ENCODE measurements at regions of chr9 and their contacts with region 1.

Region 1: DNA sequence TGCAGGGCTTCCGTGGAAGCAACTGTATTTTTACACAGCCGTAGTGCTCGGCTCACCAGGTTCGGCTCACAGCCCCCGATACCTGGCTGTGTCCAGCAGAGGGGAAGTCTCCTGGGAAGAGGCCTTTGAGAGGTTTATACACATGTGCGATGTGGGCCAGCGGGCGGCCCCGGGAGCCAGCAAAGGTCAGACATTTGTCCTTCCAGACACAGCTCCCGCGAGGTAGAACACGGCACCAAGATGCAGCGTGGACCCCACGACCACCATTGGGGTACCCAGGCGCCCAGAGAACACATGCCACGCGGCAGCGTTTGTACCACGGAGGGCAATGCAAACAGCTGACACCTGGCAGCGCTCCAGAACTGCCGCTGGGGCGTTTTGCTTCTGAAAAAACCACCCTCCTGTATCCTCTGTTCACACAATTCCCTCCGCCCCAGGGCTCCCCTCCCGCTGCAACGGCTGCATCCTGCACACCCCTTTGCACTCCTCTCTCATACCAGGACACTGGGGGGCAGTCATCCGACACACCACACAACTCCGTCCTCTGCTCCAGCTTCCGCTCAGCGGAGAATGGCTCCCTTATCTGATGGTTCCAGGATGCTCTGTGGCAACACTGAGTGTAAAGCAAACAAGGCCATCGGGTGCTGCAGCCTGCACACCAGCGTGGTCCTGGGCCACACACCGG is 235.3 kb downstream of the SYK start:
- DNase-seq: peak; percentile 87
- ATAC-seq: peak; percentile 95

Region 2: GRCh38 chr9:90921111-90921510 is 115.9 kb before region 1 on chr9:
- intact Hi-C with region 1: loop called (anchors 2 kb)
- DNase-seq: peak; percentile 88
- ATAC-seq: peak; percentile 95

Region 3: GRCh38 chr9:91060503-91061343 is 23.8 kb after region 1 on chr9:
- intact Hi-C with region 1: loop called (anchors 2 kb)
- DNase-seq: no peak
- ATAC-seq: peak; percentile 54

Region 4: GRCh38 chr9:91433180-91433579 is 396.2 kb after region 1 on chr9:
- intact Hi-C with region 1: no loop called
- DNase-seq: no peak
- ATAC-seq: peak; percentile 57

Region 5: DNA sequence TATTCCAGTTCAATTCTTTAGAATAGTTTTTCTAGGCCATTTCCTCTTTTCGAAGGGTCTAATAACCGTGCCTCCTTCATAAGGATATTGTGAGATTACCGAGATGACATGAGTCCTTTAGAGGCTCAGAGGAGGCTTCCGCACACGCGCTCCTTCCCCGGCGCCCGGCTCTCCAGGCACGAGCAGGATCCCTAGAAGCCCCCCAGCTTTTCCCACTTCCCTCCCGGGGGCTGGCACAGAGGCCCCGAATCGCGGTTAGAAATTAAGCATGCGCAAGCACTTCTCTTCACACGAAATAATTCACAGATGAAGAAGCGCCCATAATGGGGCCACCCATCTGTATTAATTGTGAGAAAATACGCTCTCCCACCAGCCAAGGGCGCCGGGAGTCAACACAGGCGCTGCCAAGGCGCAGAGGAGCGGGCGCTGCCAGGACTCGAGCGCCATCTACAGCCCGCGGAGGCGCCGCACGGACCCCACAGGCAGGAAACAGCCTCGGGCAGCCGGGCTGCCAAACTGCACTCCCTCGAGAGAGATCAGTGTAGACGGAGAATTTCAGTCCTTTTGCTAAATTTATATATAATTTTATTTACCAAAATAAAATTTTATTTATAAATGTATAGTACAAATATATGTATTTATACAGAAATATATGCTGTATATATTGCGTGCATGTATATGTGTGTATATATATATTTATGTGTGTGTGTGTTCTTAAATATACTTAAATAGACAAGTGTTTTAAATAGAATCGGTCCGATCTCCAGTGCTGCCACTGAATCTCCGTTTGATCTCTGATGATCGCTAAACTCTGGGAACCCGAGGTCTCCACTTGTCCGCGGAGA is 644.7 kb after region 1 on chr9:
- intact Hi-C with region 1: loop called (anchors 10 kb)
- DNase-seq: peak; percentile 90
- ATAC-seq: peak; percentile 88

Measured in Right ventricle myocardium inferior (tissue), 1 donor.